ENCODE measurements at regions of chr14 and their contacts with region 1.

Region 1: GRCh38 chr14:37246427-37246914 is 48.7 kb downstream of the MIPOL1 start:
- DNase-seq: no peak

Region 2: DNA sequence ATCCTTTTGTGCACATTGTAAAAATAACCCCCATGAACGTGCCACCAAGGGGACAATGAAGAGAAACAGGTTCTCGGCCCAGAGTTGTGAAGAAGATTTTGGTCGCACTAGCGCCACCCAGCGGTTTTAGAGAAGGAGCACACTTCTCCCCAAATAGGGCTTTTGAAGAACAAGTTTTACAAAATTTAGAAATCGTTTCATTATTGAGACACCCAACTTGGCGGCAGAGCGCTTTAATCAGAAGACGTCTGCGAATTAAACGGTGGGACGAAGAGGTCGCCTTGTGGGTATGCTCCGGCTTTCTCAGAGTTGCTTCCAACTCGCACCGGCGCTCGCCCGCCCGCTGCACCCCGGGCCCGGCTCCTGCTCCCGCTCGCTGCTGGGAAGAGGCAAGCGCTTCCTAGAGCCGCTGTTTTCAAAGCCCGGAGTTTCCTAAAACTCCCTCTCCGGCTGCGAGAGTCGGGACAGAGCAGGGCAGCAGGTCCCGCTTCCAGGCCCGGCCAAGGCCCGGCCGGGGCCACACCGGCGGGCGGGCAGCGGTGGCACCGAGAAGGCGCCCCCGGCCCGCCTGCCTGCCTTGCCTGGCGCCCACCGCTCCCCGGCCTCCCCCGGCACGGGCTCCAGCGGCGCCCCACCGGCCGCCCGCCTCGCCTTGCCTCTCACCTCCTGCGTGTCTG is 347.9 kb after region 1 on chr14:
- intact Hi-C with region 1: loop called (anchors 5 kb)
- DNase-seq: no peak

Region 3: GRCh38 chr14:37874429-37875191 is 628.1 kb after region 1 on chr14:
- intact Hi-C with region 1: loop called (anchors 5 kb)
- DNase-seq: peak; percentile 89